ENCODE measurements at regions of chr5 and their contacts with region 1.

Region 1: GRCh38 chr5:112419986-112420864 is 1.1 kb upstream of the EPB41L4A start:
- DNase-seq: peak; percentile 88
- H3K4me3 ChIP-seq: peak overlapping the region; percentile 61 to 65
- H3K27ac ChIP-seq: peak overlapping the region in 1 of 2 experiments; percentile 47; a peak in 1 of 4 replicates
- H3K4me1 ChIP-seq: peaks cover 0 to 5% of the 10 kb centered on the region in 2 experiments; a peak in 2 of 4 replicates
- H3K27me3 ChIP-seq: peaks cover 27% of the 10 kb centered on the region
- CTCF ChIP-seq: peak; percentile 77
- EP300 ChIP-seq: no peak
- RAD21 ChIP-seq: peak; percentile 91

Region 2: DNA sequence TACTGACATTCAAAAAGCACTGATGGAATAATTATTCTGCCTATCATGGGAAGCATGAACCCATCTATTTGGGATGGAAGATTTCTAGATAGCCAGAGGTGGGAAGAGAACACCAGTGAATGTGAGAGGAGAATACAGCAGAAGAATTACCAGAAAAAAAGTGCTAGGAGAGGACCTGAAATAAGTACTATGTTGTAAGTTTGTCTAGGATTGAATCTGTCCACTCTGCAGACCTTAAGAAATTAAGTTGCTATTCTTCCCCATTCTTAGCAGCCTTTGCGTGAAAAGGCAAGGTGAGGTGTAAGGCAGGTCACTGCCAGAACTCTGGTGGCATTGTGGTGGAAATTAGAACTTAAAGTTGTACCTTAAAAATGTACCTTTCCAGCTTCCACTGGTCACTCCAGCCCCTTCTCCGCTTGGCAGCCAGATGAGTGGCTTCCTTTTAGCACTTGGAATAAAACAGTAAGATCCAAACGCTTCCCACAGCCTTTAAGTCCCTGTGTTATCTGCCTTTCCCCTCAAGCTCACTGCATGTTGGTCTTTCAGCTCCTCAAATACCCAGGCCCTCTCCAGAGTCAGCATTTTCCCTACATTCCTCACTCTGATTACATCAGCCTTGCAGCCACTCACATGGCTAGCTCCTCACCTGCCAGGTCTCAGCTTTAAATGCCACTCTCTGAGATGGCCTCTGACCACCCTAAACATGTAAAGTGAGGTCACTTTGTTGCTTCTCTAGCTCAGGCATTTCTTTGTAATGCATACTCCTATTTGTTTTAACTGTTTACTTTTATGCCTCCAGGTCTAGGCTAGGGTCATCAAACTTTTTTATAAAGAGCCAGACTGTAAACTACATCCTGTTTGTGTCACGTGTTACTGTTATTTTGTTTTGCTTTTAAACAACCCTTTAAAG is 254.1 kb before region 1 on chr5:
- CTCF ChIA-PET with region 1: interaction called, 149 read pairs
- POLR2A ChIA-PET with region 1: interaction called, 10 read pairs
- DNase-seq: no peak
- H3K4me3 ChIP-seq: no peak overlapping the region
- H3K27ac ChIP-seq: no peak overlapping the region; a peak in 1 of 4 replicates
- H3K4me1 ChIP-seq: peaks cover 0 to 5% of the 10 kb centered on the region in 2 experiments; a peak in 3 of 4 replicates
- H3K27me3 ChIP-seq: no peaks in the 10 kb centered on the region
- CTCF ChIP-seq: no peak
- EP300 ChIP-seq: no peak
- RAD21 ChIP-seq: no peak

Region 3: GRCh38 chr5:112196584-112196983 is 223.6 kb before region 1 on chr5:
- CTCF ChIA-PET with region 1: interaction called, 13 read pairs
- POLR2A ChIA-PET with region 1: no interaction called
- DNase-seq: no peak
- H3K4me3 ChIP-seq: no peak overlapping the region
- H3K27ac ChIP-seq: no peak overlapping the region
- H3K4me1 ChIP-seq: no peaks in the 10 kb centered on the region
- H3K27me3 ChIP-seq: no peaks in the 10 kb centered on the region; the same call in none of the 2 replicates
- CTCF ChIP-seq: no peak
- EP300 ChIP-seq: no peak
- RAD21 ChIP-seq: no peak

Region 4: GRCh38 chr5:112221128-112221527 is 199.1 kb before region 1 on chr5:
- CTCF ChIA-PET with region 1: interaction called, 16 read pairs
- POLR2A ChIA-PET with region 1: no interaction called
- DNase-seq: no peak
- H3K4me3 ChIP-seq: no peak overlapping the region
- H3K27ac ChIP-seq: no peak overlapping the region
- H3K4me1 ChIP-seq: no peaks in the 10 kb centered on the region
- H3K27me3 ChIP-seq: no peaks in the 10 kb centered on the region; the same call in 1 of the 2 replicates
- CTCF ChIP-seq: no peak
- EP300 ChIP-seq: no peak
- RAD21 ChIP-seq: no peak

Region 5: GRCh38 chr5:112293587-112293986 is 126.6 kb before region 1 on chr5:
- CTCF ChIA-PET with region 1: interaction called, 14 read pairs
- POLR2A ChIA-PET with region 1: no interaction called
- DNase-seq: no peak
- H3K4me3 ChIP-seq: no peak overlapping the region
- H3K27ac ChIP-seq: no peak overlapping the region
- H3K4me1 ChIP-seq: no peaks in the 10 kb centered on the region
- H3K27me3 ChIP-seq: no peaks in the 10 kb centered on the region
- CTCF ChIP-seq: no peak
- EP300 ChIP-seq: no peak
- RAD21 ChIP-seq: no peak

Region 6: GRCh38 chr5:112388739-112389138 is 31.5 kb before region 1 on chr5:
- CTCF ChIA-PET with region 1: interaction called, 21 read pairs
- POLR2A ChIA-PET with region 1: no interaction called
- DNase-seq: no peak
- H3K4me3 ChIP-seq: no peak overlapping the region
- H3K27ac ChIP-seq: no peak overlapping the region
- H3K4me1 ChIP-seq: no peaks in the 10 kb centered on the region; a peak in 1 of 4 replicates
- H3K27me3 ChIP-seq: no peaks in the 10 kb centered on the region
- CTCF ChIP-seq: no peak
- EP300 ChIP-seq: no peak
- RAD21 ChIP-seq: no peak

Region 7: GRCh38 chr5:112742424-112742823 is 322.2 kb after region 1 on chr5:
- CTCF ChIA-PET with region 1: no interaction called
- POLR2A ChIA-PET with region 1: no interaction called
- DNase-seq: no peak
- H3K4me3 ChIP-seq: no peak overlapping the region
- H3K27ac ChIP-seq: no peak overlapping the region
- H3K4me1 ChIP-seq: peaks cover 5 to 10% of the 10 kb centered on the region in 2 experiments; a peak in 3 of 4 replicates
- H3K27me3 ChIP-seq: no peaks in the 10 kb centered on the region
- CTCF ChIP-seq: no peak
- EP300 ChIP-seq: no peak
- RAD21 ChIP-seq: no peak